ENCODE measurements at regions of chr9 and their contacts with region 1.

Region 1: GRCh38 chr9:126283799-126284465 is 42.7 kb upstream of the MVB12B start:
- DNase-seq: no peak
- ATAC-seq: no peak
- H3K4me3 ChIP-seq: no peak overlapping the region
- H3K27ac ChIP-seq: no peak overlapping the region
- H3K4me1 ChIP-seq: no peaks in the 10 kb centered on the region
- H3K27me3 ChIP-seq: no peaks in the 10 kb centered on the region
- CTCF ChIP-seq: no peak

Region 2: GRCh38 chr9:126240835-126241234 is 43.1 kb before region 1 on chr9:
- CTCF ChIA-PET with region 1: interaction called, 11 read pairs
- POLR2A ChIA-PET with region 1: no interaction called
- in situ Hi-C with region 1: no loop called
- intact Hi-C with region 1: no loop called
- DNase-seq: no peak
- ATAC-seq: no peak
- H3K4me3 ChIP-seq: no peak overlapping the region
- H3K27ac ChIP-seq: no peak overlapping the region
- H3K4me1 ChIP-seq: no peaks in the 10 kb centered on the region
- H3K27me3 ChIP-seq: no peaks in the 10 kb centered on the region; the same call in 1 of the 2 replicates
- CTCF ChIP-seq: no peak

Region 3: DNA sequence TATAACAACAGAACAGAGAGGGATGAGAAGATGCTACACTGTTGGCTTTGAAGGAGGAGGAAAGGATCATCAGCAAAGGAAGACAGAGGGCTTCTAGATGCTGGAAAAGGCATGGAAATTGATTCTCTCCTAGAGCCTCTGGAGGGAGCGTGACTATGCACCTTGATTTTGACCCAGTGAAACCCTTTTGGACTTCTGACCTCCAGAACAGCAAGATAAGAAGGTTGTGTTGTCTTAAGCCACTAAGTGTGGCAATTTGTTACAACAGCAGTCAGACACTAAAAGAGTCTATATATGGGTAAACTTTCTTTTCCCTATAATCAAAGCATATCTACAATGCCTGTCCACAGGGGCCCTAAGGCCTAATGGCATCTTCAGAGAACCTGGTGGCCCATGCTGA is 13.4 kb before region 1 on chr9:
- CTCF ChIA-PET with region 1: no interaction called
- POLR2A ChIA-PET with region 1: no interaction called
- in situ Hi-C with region 1: no loop called
- intact Hi-C with region 1: no loop called
- DNase-seq: no peak
- ATAC-seq: no peak
- H3K4me3 ChIP-seq: no peak overlapping the region
- H3K27ac ChIP-seq: no peak overlapping the region
- H3K4me1 ChIP-seq: no peaks in the 10 kb centered on the region
- H3K27me3 ChIP-seq: no peaks in the 10 kb centered on the region
- CTCF ChIP-seq: no peak